ENCODE measurements at regions of chr1 and their contacts with region 1.

Region 1: DNA sequence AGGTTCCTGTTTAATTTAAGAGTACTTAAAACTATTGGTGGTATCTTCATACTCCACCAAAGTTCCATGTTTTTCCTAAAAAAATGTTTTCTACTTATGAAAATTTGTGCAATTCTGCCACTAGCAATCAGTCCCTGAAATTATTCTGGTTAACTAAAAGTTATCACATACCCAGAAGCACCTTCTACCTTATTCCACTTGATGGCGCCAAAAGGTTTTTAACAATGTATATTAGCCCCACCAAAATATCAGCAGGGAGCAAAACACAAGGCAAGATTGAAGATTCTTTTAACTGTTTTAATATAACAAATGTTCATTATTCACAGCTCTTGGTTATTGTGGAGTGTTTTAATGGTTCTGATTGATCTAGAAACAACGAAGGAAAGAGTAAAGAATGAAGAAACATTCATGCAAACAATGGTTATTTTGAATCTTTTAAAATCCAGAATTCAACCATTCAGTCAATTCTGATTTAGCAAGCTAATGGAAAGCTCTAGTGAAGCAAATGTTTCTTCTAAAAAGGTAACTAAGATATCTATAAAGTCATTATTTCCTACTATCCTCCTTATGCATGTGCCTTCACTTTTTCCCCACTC is 67.2 kb downstream of the TTLL7 start:
- DNase-seq: no peak
- H3K4me3 ChIP-seq: no peak overlapping the region
- H3K27ac ChIP-seq: no peak overlapping the region
- H3K4me1 ChIP-seq: peaks cover 0 to 12% (median 0%) of the 10 kb centered on the region in 4 donors
- H3K27me3 ChIP-seq: no peaks in the 10 kb centered on the region
- CTCF ChIP-seq: peak; percentile 57 to 70 (median 62)
- EP300 ChIP-seq: no peak
- POLR2A ChIP-seq: no peak

Region 2: DNA sequence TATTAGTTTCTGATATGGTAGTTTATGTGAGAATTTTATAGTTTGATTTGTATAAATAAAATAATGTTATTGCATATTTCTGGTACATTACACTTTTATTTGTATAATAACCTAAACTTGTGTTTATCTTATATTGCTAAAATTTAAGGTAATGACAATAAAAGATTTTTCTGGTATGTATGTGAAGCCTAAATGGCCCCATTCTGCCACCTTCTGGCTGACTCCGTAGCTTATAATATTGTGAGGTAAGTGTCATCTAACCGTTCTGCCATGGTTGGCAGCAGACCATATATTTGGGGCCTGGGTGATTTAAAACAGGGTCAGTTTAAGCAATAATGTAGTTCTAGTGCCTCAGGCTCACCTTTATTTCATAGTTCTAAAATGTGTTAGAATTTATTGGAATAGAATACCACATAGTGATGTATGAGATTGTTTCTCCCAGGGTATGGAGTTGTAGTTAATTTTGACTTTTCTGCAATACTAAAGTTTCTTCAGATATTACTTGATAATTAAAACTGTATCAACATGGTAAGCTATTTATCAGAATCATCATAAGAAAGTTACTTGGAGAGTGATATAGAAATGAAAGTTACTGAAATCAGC is 191.1 kb after region 1 on chr1:
- intact Hi-C with region 1: loop called (anchors 1 kb)
- DNase-seq: peak; percentile 53
- H3K4me3 ChIP-seq: no peak overlapping the region
- H3K27ac ChIP-seq: no peak overlapping the region
- H3K4me1 ChIP-seq: peaks cover 0 to 9% (median 0%) of the 10 kb centered on the region in 4 donors
- H3K27me3 ChIP-seq: no peaks in the 10 kb centered on the region
- CTCF ChIP-seq: peak; percentile 19 to 59 (median 53)
- EP300 ChIP-seq: no peak
- POLR2A ChIP-seq: no peak

Region 3: DNA sequence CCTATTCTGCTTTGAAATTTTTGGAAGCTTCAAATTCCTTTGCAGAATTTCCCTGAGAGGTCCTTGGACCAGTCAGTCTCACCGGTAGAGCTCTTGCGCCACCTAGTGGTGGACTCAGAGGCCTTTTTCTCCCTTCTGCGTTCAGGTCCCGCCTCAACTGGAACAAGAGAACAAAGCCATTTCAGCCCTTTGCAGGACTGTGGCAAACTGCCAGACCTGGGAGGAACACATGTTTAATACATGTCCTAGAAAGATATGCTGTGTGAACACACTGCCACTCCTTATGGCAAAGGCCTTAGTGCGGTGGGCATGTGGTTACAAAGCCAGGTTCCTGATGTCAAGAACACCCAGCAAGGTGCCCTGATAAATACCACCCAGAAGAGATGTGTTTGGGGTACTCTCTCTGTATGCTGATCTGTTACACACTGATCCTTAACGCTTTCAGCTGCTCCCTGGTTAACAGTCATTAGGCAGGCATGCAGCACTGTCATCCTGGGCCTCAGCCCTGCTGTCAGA is 840.7 kb after region 1 on chr1:
- intact Hi-C with region 1: loop called (anchors 5 kb)
- DNase-seq: peak; percentile 91
- H3K4me3 ChIP-seq: no peak overlapping the region
- H3K27ac ChIP-seq: no peak overlapping the region
- H3K4me1 ChIP-seq: no peaks in the 10 kb centered on the region
- H3K27me3 ChIP-seq: no peaks in the 10 kb centered on the region
- CTCF ChIP-seq: peak; percentile 73 to 90 (median 80)
- EP300 ChIP-seq: no peak
- POLR2A ChIP-seq: no peak

Measured in sigmoid colon (tissue), 7 donors.